PC-9 (cell line): ENCODE measurements at regions of chr20 and their contacts with region 1.

Region 1: GRCh38 chr20:45373353-45374100 is 4.6 kb downstream of the TP53TG5 start:
- DNase-seq: peak; percentile 57 to 87
- H3K4me3 ChIP-seq: no peak overlapping the region
- H3K27ac ChIP-seq: no peak overlapping the region
- H3K4me1 ChIP-seq: no peaks in the 10 kb centered on the region
- H3K27me3 ChIP-seq: no peaks in the 10 kb centered on the region
- CTCF ChIP-seq: peak; percentile 76

Region 2: GRCh38 chr20:45415774-45416637 is 42.5 kb after region 1 on chr20 and contains the start of gene PIGT:
- CTCF ChIA-PET with region 1: interaction called, 3 read pairs
- POLR2A ChIA-PET with region 1: no interaction called
- intact Hi-C with region 1: loop called (anchors 1 kb)
- DNase-seq: peak; percentile 81 to 85
- H3K4me3 ChIP-seq: peak within 1 kb of the TSS; percentile 76
- H3K27ac ChIP-seq: peak within 1 kb of the TSS; percentile 35
- H3K4me1 ChIP-seq: peaks cover 48% of the 10 kb centered on the region
- H3K27me3 ChIP-seq: no peaks in the 10 kb centered on the region
- CTCF ChIP-seq: no peak
- total RNA-seq, gene PIGT: 101 and 121 TPM in 2 replicates

Region 3: GRCh38 chr20:45436732-45437391 is 63.3 kb after region 1 on chr20:
- CTCF ChIA-PET with region 1: interaction called, 48 read pairs
- POLR2A ChIA-PET with region 1: no interaction called
- intact Hi-C with region 1: loop called (anchors 2 kb)
- DNase-seq: peak; percentile 70 to 89
- H3K4me3 ChIP-seq: peak overlapping the region; percentile 78
- H3K27ac ChIP-seq: no peak overlapping the region
- H3K4me1 ChIP-seq: peaks cover 14% of the 10 kb centered on the region
- H3K27me3 ChIP-seq: no peaks in the 10 kb centered on the region
- CTCF ChIP-seq: peak; percentile 98